AG04449 (cell line): ENCODE measurements at regions of chr2 and their contacts with region 1.

Region 1: GRCh38 chr2:195498176-195498575 is 158.8 kb upstream of the SLC39A10 start:
- DNase-seq: no peak
- H3K4me3 ChIP-seq: no peak overlapping the region
- CTCF ChIP-seq: no peak

Region 2: GRCh38 chr2:195509551-195509950 is 11.4 kb after region 1 on chr2:
- CTCF ChIA-PET with region 1: interaction called, 10 read pairs
- POLR2A ChIA-PET with region 1: no interaction called
- DNase-seq: no peak
- H3K4me3 ChIP-seq: no peak overlapping the region
- CTCF ChIP-seq: no peak